Cardiac septum (tissue), 1 donor: ENCODE measurements at regions of chr6 and their contacts with region 1.

Region 1: GRCh38 chr6:148578245-148578732 is 168.5 kb upstream of the UST start:
- DNase-seq: no peak

Region 2: DNA sequence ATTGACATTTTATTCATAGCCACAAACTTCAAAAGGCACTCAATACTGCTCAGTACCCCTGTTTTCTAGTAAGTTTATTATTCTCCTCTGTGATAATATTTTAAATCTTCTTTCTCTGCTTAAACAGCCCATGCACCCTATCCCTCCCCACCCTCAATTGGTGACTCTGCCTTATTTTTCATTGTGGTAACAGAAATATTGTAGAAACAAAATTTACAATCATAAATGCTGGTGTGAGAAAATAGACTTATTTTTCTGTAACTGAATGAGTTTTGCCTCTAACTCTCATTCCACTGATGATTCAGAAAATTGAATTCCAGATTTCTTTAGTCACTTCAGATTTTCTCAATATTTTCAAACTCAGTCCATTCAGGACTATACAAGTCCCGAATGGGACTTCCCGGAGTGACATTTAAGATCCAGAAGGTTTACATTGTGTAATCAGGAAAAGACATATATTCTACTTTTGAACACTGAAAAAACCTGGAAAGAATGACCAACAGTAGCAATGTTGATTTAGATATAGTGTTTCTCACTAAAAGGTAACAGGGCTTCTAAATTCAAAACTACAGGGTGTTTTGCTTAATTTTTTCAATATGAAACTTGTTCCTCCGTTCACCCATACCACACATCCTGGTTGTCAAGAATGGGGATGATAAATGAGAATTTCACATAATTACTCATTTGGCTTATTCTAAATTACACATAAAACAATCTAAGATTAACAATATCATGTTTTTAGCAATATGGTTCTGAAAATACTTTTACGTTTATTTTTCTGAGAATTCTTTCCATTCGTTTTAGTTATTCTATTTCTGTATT is 133.8 kb after region 1 on chr6:
- intact Hi-C with region 1: loop called (anchors 10 kb)
- DNase-seq: no peak

Region 3: DNA sequence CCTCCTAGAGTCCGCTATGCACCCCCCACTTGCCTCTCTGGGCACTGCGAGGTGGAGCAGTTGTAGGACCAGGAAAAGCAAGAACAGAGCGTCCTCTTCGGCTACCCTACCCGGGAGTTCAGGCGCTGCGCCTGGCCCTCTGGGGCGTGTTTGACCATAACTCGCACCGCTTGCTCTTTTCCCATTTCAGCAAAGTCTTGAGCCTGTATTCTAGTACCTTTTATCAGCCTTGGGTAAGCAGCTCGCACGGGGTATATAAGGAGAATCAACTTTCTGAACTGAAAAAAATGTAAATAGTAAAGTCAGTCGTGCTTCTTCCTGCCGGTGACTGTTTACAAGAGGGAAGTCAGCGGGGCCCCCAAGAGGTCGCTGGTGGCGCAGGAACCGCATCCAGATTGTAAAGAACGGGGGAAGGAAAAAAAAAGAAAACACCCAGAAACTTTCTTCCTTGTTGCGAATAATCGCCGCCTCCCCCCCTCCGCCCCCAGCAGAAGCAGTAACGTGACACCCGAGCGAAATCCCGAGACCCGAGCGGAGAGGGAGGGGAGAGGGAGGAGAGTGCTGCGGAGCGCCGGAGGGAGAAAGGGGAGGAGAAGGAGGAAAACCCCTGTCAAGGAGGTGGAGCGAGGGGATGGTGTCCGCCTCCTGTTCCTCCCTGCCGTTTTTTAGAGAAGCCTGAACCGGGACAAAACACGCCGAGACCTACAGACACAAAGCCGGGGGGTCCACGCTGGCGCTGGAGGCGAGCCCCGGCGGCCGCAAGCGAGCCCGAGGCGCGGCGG is 168.3 kb after region 1 on chr6 and contains the start of gene UST:
- intact Hi-C with region 1: loop called (anchors 10 kb)
- DNase-seq: peak; percentile 85
- total RNA-seq, gene UST: 2.1 TPM

Region 4: DNA sequence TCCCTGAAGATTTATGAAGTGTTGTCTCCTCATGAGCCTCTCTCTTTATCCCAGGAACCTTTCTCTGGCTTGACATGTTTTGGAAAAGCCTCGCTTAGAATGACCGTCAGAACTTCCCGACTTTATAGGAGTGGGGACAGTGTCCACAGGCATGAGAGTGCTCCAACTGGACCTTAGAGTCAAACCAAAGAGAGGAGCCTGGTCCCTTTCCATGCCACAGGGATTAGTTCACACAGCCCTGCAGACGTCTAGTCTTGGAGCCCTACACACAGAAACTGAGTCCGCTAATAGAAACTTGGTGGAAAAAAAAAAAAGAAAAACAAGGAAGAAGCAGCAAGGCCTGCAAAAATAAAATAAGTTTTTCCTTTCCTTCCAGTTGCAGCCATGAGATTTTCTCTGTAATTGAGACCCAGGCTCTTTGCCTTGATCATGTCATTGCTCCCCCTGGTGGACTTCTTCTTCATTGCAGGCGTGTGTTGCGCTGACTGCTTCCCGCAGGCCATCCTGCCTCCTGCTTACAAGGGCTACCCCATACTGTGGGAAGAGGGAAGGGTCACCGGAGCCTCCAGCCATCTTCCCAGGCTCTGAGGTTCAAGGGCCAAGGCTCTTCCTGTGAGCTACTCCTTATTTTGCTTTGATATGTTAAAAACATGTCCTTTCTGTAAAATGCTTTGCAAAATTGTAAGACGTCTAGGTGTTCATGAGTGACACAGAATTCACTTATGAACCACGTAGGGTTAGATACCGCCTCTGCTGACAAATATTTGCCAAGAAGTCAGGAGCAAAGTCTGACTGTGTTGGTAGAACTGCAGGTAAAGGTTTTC is 369.5 kb after region 1 on chr6:
- intact Hi-C with region 1: loop called (anchors 5 kb)
- DNase-seq: no peak